Left ventricle myocardium superior (tissue), 1 donor: ENCODE measurements at regions of chr19 and their contacts with region 1.

Region 1: GRCh38 chr19:46661735-46662592 is 982 bp upstream of the DACT3 start:
- DNase-seq: peak; percentile 86
- ATAC-seq: peak; percentile 79

Region 2: GRCh38 chr19:46616631-46617322 is 45.2 kb before region 1 on chr19:
- intact Hi-C with region 1: loop called (anchors 2 kb)
- DNase-seq: peak; percentile 84
- ATAC-seq: peak; percentile 70